AG04450 (cell line): ENCODE measurements at regions of chr1 and their contacts with region 1.

Region 1: DNA sequence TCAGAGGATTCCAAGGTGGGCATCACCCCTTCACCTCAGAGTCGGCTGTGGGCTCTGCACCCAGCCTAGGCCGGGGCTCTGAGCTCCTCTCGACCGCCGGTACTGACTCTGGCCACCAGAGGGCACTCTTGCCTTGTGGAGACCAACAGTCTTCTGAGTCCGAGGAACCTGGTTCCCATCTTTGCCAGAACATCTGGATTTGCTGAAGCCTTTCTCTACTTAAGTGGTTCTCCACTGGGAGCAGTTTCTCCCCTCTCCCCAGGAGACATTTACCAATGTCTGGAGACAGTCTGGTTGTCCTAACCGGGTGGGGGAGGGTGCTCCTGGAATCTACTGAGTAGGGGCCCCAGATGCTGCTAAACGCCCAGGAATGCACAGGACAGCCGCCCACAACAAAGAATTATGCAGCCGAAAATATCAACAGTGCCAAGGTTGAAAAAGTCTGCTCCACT is 9.4 kb downstream of the ETV3L start:
- DNase-seq: peak; percentile 84
- H3K4me3 ChIP-seq: 0 out of 2 replicates have a peak overlapping the region, but pooled peaks have one; percentile 13
- H3K27ac ChIP-seq: no peak overlapping the region
- H3K27me3 ChIP-seq: no peaks in the 10 kb centered on the region
- CTCF ChIP-seq: peak; percentile 95

Region 2: GRCh38 chr1:157073944-157074767 is 16.1 kb before region 1 on chr1:
- CTCF ChIA-PET with region 1: interaction called, 31 read pairs
- POLR2A ChIA-PET with region 1: no interaction called
- DNase-seq: peak; percentile 32
- H3K4me3 ChIP-seq: no peak overlapping the region
- H3K27ac ChIP-seq: no peak overlapping the region
- H3K27me3 ChIP-seq: peaks cover 15% of the 10 kb centered on the region
- CTCF ChIP-seq: peak; percentile 71

Region 3: DNA sequence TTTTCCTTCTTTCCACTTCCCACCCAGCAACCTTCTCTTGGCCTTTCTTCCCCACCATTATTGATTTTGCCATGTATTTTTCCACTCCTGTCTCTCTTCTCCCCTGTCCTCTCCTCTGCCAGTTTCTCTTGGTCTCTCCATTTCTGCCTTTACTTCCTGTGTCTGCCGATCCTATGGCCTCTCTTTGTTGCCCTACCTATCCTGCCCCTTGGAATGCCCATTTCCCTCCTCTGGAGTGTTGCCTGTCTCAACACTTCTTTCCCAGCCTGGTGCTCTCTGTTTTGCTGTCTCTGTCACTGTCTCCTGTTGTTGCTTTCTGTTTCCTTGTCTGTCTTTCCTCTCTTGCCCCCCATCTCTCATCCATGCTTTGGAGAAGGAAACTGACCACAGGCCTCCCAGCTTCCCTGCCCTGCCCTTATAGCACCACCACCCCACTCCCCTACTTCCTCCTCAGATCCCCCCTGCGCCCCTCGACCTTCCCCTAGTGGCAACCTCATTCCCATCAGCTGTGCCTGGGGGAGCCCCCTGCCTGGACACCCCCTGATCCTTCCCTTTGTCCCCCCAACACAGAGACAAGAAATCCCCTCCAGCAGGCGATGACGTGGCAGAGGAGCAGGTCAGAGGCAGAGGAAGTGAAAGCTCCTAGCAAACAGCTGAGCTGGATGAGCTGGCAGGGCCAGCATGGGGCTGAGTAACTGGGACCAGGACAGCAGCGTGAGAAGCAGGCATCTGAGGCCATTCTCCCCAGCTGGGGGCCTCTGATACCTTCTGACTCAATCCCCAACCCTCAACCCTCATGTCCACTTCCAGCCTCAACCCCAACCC is 16.0 kb after region 1 on chr1:
- CTCF ChIA-PET with region 1: interaction called, 38 read pairs
- POLR2A ChIA-PET with region 1: interaction called, 5 read pairs
- DNase-seq: peak; percentile 70
- H3K4me3 ChIP-seq: no peak overlapping the region
- H3K27ac ChIP-seq: peak overlapping the region; percentile 87
- H3K27me3 ChIP-seq: no peaks in the 10 kb centered on the region
- CTCF ChIP-seq: no peak

Region 4: GRCh38 chr1:157117527-157118057 is 27.4 kb after region 1 on chr1:
- CTCF ChIA-PET with region 1: interaction called, 23 read pairs
- POLR2A ChIA-PET with region 1: no interaction called
- DNase-seq: no peak
- H3K4me3 ChIP-seq: no peak overlapping the region
- H3K27ac ChIP-seq: no peak overlapping the region
- H3K27me3 ChIP-seq: peaks cover 8% of the 10 kb centered on the region
- CTCF ChIP-seq: no peak

Region 5: DNA sequence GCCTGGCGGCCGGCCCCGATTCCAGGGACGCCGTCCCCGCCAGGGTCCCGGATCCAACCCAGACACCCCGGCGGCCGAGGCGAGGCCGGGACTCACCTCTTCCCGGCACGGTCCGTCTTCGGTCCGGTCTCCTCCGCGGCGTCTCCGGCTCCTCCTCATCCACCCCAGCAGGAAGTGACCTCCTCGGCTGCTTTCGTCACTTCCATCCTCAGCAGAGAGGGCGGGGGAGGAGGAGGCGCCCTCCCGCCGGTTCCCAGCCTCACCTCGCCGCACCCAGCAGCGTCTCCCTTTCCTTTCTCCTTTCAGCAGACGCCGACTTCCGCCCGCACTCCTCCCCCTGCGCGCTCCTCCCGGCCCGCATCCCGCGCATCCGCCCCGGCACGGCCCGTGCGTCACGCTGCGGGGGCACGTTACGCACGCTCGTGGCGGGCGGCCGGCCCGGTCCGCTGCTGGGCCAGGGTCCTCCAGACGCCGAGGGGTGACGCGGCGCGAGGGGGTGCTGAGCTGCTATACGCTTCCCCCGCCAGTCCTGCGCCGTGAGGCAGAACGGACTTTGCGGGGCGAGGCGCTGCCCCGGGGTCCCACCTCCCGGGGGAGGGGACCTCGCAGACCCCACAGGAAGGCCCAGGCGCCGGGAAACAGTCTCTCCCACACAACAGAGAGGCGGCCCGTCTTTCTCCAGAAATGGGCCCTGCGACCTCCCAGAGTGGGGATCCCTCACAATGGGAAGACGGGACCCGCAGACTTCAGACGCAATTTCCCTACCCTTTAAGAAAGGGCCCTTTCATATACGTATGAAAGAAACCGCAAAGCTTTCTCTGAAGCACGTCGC is 48.2 kb after region 1 on chr1 and contains the start of gene ETV3:
- CTCF ChIA-PET with region 1: interaction called, 23 read pairs
- POLR2A ChIA-PET with region 1: interaction called, 4 read pairs
- DNase-seq: peak; percentile 73
- H3K4me3 ChIP-seq: peak within 1 kb of the TSS; percentile 99
- H3K27ac ChIP-seq: peak within 1 kb of the TSS; percentile 98
- H3K27me3 ChIP-seq: no peaks in the 10 kb centered on the region
- CTCF ChIP-seq: no peak
- polyA plus RNA-seq, gene ETV3: 9.2 and 10.0 TPM in 2 replicates

Region 6: GRCh38 chr1:157163273-157164127 is 73.3 kb after region 1 on chr1:
- CTCF ChIA-PET with region 1: interaction called, 406 read pairs
- POLR2A ChIA-PET with region 1: no interaction called
- DNase-seq: no peak
- H3K4me3 ChIP-seq: no peak overlapping the region
- H3K27ac ChIP-seq: no peak overlapping the region
- H3K27me3 ChIP-seq: peaks cover 27% of the 10 kb centered on the region
- CTCF ChIP-seq: peak; percentile 96

Region 7: GRCh38 chr1:157249326-157249725 is 159.1 kb after region 1 on chr1:
- CTCF ChIA-PET with region 1: no interaction called
- POLR2A ChIA-PET with region 1: no interaction called
- DNase-seq: no peak
- H3K4me3 ChIP-seq: no peak overlapping the region
- H3K27ac ChIP-seq: no peak overlapping the region
- H3K27me3 ChIP-seq: no peaks in the 10 kb centered on the region
- CTCF ChIP-seq: no peak